ENCODE measurements at regions of chr2 and their contacts with region 1.

Region 1: GRCh38 chr2:10688921-10689807 is 611 bp downstream of the NOL10 start:
- DNase-seq: no peak
- H3K4me3 ChIP-seq: peak overlapping the region; percentile 90 to 99
- H3K27ac ChIP-seq: peak overlapping the region; percentile 94 to 97
- H3K4me1 ChIP-seq: peaks cover 0 to 6% of the 10 kb centered on the region in 2 donors
- H3K27me3 ChIP-seq: no peaks in the 10 kb centered on the region
- CTCF ChIP-seq: no peak

Region 2: GRCh38 chr2:10457911-10458604 is 231.1 kb before region 1 on chr2:
- intact Hi-C with region 1: loop called (anchors 10 kb)
- DNase-seq: no peak
- H3K4me3 ChIP-seq: no peak overlapping the region
- H3K27ac ChIP-seq: peak overlapping the region in 1 of 2 donors; percentile 1
- H3K4me1 ChIP-seq: peaks cover 0 to 21% of the 10 kb centered on the region in 2 donors
- H3K27me3 ChIP-seq: no peaks in the 10 kb centered on the region
- CTCF ChIP-seq: no peak

Region 3: GRCh38 chr2:10717613-10718012 is 28.4 kb after region 1 on chr2:
- intact Hi-C with region 1: loop called (anchors 2 kb)
- DNase-seq: peak in 1 of 2 donors; percentile 78
- H3K4me3 ChIP-seq: no peak overlapping the region
- H3K27ac ChIP-seq: peak overlapping the region; percentile 65 to 71
- H3K4me1 ChIP-seq: peaks cover 13 to 31% of the 10 kb centered on the region in 2 donors
- H3K27me3 ChIP-seq: no peaks in the 10 kb centered on the region
- CTCF ChIP-seq: no peak

Region 4: DNA sequence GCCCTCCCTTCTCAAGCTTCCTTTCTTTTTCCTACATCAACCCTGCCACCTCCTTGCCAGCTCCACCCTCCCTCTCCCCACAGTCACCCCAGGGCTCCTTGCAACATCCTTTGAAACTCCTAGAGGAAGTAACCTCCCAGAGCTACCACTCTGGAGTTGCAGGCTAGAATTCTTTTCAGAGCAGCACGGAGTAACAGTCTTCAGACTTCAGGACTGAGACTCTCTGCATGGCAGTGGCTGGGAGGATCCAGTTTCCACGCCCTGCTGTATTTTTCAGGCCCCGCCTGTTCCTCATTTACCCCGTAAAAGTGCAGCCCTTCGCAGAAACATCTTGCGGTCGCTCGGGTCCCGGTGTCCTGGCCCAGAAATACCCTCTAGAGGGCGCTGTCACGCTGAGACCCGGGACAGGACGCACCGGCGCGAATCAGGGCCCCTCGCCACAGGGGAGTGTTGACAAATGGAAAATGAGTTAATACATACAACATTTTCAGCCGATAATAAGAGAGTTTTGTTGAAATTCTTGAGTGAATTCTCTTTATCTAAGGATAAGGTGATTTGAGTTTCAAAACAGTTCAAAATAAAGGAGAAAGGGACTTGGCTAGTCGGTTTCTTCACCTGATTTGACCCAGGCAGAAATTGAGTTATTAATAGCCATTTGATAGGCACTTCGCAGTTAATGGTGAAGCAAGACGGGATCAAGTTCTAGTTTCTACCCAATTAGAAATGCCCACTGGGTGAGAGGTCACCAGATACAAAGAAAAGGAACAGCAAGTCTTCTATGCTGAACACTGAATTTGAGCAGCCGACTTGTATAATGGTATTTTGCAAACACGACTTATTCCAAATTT is 999.3 kb after region 1 on chr2:
- intact Hi-C with region 1: no loop called
- DNase-seq: peak; percentile 46 to 91
- H3K4me3 ChIP-seq: peak overlapping the region; percentile 32 to 47
- H3K27ac ChIP-seq: peak overlapping the region; percentile 57 to 70
- H3K4me1 ChIP-seq: peaks cover 0 to 17% of the 10 kb centered on the region in 2 donors
- H3K27me3 ChIP-seq: no peaks in the 10 kb centered on the region
- CTCF ChIP-seq: peak; percentile 74 to 95 (median 76)

Measured in ascending aorta (tissue), 2 donors.